ENCODE measurements at regions of chr13 and their contacts with region 1.

Region 1: DNA sequence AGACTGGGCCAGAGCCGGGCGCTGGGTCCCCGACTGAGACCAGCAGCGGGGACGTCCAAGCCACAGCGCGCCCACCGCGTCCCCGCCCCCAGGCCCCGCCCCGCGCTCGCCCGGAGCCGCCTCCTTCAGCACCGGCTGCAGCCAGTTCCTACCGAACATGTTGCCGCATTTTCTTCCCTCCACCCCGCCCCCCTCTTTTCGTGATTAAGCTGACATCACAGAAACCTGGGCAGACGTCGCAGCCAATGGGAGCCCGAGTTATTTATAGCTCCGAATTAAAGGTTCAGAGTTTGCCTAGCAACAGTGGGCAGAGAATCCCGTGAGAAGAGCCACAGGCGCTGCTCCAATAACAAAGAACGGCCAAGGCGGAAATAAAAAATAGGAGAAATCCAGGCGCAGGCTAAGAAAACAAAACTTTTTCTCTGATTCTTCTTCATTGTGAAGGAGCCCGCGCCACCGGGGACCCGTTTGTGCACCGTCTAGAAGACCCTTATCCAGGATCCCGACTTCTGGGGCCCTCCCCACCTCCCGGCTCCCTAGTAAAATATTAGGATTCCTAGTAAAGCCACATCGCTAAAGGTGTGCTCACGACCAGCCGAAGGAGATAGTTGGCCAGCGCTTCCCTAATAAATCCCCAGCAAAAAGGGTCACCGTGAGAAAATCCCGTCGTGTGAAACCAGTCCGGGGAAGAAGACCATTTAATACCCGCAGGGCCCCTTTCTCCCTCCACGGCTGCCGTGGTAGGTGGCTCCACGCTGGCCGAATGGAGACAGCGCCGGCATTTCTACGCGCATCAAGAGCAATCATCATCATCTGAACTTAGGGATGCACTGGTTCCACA is 61.7 kb downstream of the SERP2 start:
- DNase-seq: peak; percentile 96
- ATAC-seq: peak; percentile 89
- H3K4me3 Mint-ChIP-seq: peak overlapping the region; percentile 76
- H3K27ac Mint-ChIP-seq: peak overlapping the region; percentile 76
- H3K4me1 Mint-ChIP-seq: peaks cover 18% of the 10 kb centered on the region
- H3K27me3 Mint-ChIP-seq: peaks cover 9% of the 10 kb centered on the region
- CTCF ChIP-seq: no peak

Region 2: GRCh38 chr13:43905435-43906031 is 529.8 kb before region 1 on chr13:
- CTCF ChIA-PET with region 1: interaction called, 149 read pairs
- POLR2A ChIA-PET with region 1: no interaction called
- intact Hi-C with region 1: loop called (anchors 2 kb)
- DNase-seq: peak; percentile 33
- ATAC-seq: peak; percentile 53
- H3K4me3 Mint-ChIP-seq: no peak overlapping the region
- H3K27ac Mint-ChIP-seq: no peak overlapping the region
- H3K4me1 Mint-ChIP-seq: peaks cover 6% of the 10 kb centered on the region
- H3K27me3 Mint-ChIP-seq: peaks cover 11% of the 10 kb centered on the region
- CTCF ChIP-seq: peak; percentile 65

Region 3: DNA sequence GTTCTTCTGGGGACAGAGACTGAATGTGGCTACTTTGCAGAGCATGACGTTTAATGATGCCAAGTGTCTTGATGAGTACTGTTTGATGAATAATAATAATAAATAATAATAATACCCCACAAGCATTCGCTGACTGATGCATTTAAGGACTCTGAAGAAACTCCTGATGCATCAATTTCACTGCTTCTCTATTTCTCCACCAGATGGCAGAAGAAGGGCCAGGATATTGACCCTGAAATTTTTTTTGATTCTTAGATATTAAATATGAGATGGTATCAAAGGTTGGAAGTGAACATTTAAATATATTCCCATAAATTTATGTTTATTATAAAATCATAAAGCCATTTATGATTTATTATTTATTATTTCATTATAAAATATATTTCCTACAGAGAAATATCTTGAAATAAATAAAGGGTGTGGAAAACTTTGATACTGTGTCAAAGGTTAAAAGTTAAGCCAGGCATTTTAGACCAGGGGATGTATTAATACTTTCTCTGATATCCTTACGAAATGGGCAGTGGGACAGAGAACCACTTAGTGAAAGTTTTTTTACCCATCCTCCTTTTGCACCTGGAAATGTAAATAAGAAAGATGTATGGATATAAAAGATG is 384.8 kb before region 1 on chr13:
- CTCF ChIA-PET with region 1: interaction called, 13 read pairs
- POLR2A ChIA-PET with region 1: no interaction called
- intact Hi-C with region 1: loop called (anchors 2 kb)
- DNase-seq: no peak
- ATAC-seq: no peak
- H3K4me3 Mint-ChIP-seq: no peak overlapping the region
- H3K27ac Mint-ChIP-seq: no peak overlapping the region
- H3K4me1 Mint-ChIP-seq: peaks cover 4% of the 10 kb centered on the region
- H3K27me3 Mint-ChIP-seq: peaks cover 16% of the 10 kb centered on the region
- CTCF ChIP-seq: peak; percentile 68

Region 4: GRCh38 chr13:44141725-44142539 is 293.4 kb before region 1 on chr13:
- CTCF ChIA-PET with region 1: interaction called, 3 read pairs
- POLR2A ChIA-PET with region 1: no interaction called
- intact Hi-C with region 1: loop called (anchors 5 kb)
- DNase-seq: peak; percentile 93
- ATAC-seq: peak; percentile 100
- H3K4me3 Mint-ChIP-seq: peak overlapping the region; percentile 88
- H3K27ac Mint-ChIP-seq: peak overlapping the region; percentile 89
- H3K4me1 Mint-ChIP-seq: peaks cover 14% of the 10 kb centered on the region
- H3K27me3 Mint-ChIP-seq: peaks cover 2% of the 10 kb centered on the region
- CTCF ChIP-seq: no peak

Region 5: GRCh38 chr13:44191504-44192171 is 243.7 kb before region 1 on chr13:
- CTCF ChIA-PET with region 1: interaction called, 12 read pairs
- POLR2A ChIA-PET with region 1: no interaction called
- intact Hi-C with region 1: loop called (anchors 5 kb)
- DNase-seq: peak; percentile 53
- ATAC-seq: peak; percentile 84
- H3K4me3 Mint-ChIP-seq: peak overlapping the region; percentile 9
- H3K27ac Mint-ChIP-seq: peak overlapping the region; percentile 67
- H3K4me1 Mint-ChIP-seq: peaks cover 25% of the 10 kb centered on the region
- H3K27me3 Mint-ChIP-seq: peaks cover 9% of the 10 kb centered on the region
- CTCF ChIP-seq: peak; percentile 57

Region 6: DNA sequence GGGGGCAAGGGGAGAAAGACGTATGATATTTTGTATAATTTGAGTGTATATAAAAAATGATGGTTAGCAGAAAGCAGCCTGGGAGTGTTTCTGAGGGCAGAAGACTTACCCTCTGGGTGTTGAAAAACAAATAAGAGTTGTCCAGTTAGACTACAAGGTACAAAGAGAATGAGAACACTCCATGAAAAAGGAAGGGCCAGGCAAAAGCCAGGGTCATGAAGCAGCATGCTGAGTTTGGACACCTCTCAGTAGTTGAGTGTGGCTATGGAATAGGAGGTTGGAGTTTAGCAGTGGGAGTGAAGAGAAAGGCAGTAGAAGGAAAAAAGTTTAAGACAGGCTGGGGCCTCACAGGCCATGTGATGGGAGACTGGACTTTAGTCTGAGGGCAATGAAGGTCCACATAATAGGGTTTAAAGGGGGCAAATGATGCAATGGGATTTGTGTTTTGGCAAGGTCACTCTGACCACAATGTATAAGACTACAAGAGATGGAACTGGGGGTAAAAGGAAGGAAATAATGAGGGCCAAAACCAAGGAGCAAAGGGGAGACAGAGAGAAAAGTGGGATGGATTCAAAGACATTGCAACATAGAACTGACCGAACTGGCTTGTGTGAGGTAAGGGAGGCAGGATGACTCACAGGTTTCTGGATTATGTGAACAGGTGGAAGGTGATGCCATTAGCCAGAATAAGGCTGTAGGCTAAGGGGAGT is 14.8 kb after region 1 on chr13:
- CTCF ChIA-PET with region 1: interaction called, 11 read pairs
- POLR2A ChIA-PET with region 1: no interaction called
- intact Hi-C with region 1: no loop called
- DNase-seq: no peak
- ATAC-seq: no peak
- H3K4me3 Mint-ChIP-seq: no peak overlapping the region
- H3K27ac Mint-ChIP-seq: no peak overlapping the region
- H3K4me1 Mint-ChIP-seq: no peaks in the 10 kb centered on the region
- H3K27me3 Mint-ChIP-seq: no peaks in the 10 kb centered on the region
- CTCF ChIP-seq: no peak